Activated CD8-positive, alpha-beta T cell treated with anti-CD3 and anti-CD28 coated beads for 36 hours (primary cell): ENCODE measurements at regions of chr3 and their contacts with region 1.

Region 1: DNA sequence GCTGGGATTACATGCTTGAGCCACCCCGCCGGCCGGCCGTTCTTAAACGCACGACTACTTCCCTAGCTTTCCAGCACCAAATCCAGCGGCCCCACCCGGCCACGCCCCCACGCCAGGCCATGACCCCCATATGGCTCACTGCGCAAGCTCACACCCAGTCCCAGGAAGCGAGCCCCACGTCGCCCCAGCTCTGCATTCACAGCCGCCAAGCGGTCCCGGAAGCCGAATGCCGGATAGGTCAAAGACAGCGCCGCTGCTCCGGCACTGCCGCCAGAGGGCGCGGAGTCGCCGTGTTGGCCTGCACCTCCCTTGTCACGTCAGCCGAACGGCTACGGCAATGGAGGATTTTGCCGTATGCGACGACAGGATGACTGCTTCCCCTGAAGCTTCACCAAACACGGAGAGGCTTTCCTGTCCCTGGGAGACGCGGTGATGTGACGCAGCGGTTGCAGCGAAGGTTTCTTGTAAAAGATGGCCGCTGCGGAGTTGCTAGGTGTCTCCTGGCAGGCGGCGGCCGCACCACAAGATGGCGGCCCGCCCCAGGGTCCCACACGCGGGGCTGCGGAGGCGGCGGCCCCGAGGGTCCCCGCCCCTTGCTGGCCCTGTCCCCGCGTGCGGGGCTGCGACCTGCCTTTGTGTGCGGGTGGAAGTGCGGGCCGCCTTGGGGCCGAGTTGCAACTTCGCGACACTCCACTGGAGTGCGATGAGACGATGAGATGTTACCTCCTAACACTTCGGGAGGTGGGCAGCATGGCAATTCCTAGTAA is 30.2 kb upstream of the RPN1 start:
- DNase-seq: peak; percentile 98
- ATAC-seq: peak; percentile 98
- H3K4me3 Mint-ChIP-seq: peak overlapping the region; percentile 93
- H3K27ac Mint-ChIP-seq: peak overlapping the region; percentile 98
- H3K4me1 Mint-ChIP-seq: peaks cover 19% of the 10 kb centered on the region
- H3K27me3 Mint-ChIP-seq: no peaks in the 10 kb centered on the region
- CTCF ChIP-seq: peak; percentile 90

Region 2: DNA sequence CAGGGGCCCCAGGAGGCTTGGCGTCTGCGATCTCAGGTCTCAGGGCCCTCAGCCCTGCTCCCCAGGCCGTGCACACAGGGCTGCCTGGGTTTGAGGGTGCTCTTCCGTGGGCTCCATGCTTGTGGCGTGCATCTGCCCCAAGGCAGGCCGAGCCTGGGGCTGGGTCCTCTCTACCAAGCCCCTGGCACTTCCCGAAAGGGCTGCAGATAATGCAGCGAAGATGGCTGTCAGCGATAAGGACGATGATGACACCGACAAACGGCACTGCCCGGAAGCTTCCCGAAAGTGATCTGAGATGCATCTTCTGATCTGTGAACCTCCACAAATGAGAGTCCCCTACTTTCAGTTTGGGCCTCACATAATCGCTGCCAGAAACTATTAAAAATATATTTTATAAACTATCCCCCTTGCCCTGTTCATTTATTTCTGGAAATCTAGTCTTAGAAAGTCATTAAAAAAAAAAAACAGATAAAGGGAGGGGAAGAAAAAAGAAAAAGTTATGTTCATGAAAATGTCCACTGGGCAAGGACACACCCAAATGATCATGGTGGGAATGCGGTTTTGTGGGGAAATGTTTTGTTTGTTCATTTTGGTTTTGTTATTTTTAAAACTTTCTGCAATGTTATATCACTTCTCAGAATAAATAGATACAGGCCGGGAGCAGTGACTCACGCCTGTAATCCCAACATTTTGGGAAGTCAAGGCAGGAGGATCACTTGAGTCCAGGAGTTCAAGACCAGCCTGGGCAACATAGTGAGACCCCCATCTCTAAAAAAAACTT is 81.7 kb before region 1 on chr3:
- CTCF ChIA-PET with region 1: no interaction called
- POLR2A ChIA-PET with region 1: no interaction called
- intact Hi-C with region 1: no loop called
- DNase-seq: no peak
- ATAC-seq: no peak
- H3K4me3 Mint-ChIP-seq: no peak overlapping the region
- H3K27ac Mint-ChIP-seq: no peak overlapping the region
- H3K4me1 Mint-ChIP-seq: peaks cover 3% of the 10 kb centered on the region
- H3K27me3 Mint-ChIP-seq: no peaks in the 10 kb centered on the region
- CTCF ChIP-seq: no peak

Region 3: DNA sequence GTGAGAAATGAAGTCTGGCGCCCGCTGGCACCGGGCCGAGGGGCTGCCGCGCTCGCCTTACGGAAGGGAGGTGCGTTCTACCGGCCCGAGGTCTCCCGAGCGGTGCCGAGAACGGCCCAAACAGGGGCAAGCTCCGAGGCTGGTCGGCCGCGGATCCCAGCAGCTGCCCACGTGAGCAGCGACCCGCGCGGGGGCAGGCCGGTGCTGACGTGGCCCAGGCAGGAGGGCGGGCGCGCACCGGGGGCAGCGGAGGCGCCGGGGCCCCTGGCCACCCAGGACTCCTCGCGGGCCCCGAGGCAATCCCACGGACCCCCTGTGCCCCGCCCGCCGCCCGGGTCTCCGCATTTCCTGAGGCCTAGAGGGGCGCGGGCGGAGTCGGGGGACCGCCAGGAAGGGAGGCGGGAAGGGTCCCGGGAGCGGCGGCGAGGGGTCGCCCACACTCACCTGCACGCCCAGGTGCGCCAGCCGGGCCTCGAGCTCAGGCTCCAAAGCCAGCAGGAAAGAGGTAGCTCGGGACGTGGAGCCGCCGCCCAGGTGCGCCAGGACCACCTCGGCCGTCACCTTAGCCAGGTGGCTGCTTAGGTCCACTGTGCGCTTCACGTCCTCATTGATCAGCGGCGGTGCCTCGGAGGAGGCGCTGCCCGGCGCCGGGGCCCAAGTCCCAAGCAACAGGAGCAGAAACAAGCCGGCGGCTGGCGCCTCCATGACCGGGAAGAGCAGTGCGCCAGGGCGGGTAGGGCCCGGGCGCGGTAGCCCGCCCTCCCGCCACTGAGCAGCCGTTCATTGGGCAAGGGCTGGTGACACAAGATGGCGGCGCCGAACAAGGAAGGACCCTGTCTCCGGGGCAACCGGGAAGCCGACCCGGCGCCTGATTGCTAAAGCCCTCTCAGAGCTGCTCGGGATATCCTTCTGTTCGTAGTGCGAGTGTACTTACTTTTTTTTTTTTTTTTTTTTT is 30.4 kb before region 1 on chr3 and contains the start of gene RPN1:
- CTCF ChIA-PET with region 1: interaction called, 11 read pairs
- POLR2A ChIA-PET with region 1: interaction called, 11 read pairs
- intact Hi-C with region 1: no loop called
- DNase-seq: peak; percentile 97
- ATAC-seq: peak; percentile 97
- H3K4me3 Mint-ChIP-seq: peak within 1 kb of the TSS; percentile 87
- H3K27ac Mint-ChIP-seq: peak within 1 kb of the TSS; percentile 88
- H3K4me1 Mint-ChIP-seq: peaks cover 34% of the 10 kb centered on the region
- H3K27me3 Mint-ChIP-seq: no peaks in the 10 kb centered on the region
- CTCF ChIP-seq: no peak
- total RNA-seq, gene RPN1: 133 TPM

Region 4: DNA sequence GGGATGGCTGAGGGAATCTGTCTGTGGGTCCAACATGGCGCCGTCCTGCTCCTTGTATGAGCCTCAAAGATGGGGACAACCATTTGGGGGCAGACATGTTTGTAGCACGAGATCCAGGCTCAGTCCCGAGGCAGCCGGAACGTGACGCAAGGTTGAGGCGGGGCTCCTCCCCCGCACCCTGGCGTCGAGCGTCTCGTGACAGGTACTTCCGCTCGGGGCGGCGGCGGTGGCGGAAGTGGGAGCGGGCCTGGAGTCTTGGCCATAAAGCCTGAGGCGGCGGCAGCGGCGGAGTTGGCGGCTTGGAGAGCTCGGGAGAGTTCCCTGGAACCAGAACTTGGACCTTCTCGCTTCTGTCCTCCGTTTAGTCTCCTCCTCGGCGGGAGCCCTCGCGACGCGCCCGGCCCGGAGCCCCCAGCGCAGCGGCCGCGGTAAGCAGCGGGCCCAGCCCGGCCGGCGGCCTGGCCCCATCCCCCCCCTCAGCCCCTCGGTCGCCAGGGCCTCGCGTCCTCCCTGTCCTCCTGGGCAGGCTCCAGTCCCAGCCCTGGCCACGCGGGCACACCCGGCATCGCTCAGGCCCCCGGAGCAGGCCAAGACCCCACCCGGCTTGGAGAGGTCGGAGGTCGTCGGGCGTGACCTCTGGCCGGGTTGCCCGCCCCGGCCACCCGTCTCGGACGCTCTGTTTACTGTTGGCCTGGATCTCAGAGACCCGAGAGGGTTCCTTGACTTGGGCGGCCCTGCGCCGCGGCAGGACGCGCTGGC is 45.3 kb after region 1 on chr3 and contains the start of gene RAB7A:
- CTCF ChIA-PET with region 1: interaction called, 25 read pairs
- POLR2A ChIA-PET with region 1: interaction called, 11 read pairs
- intact Hi-C with region 1: loop called (anchors 5 kb)
- DNase-seq: peak; percentile 98
- ATAC-seq: peak; percentile 90
- H3K4me3 Mint-ChIP-seq: peak within 1 kb of the TSS; percentile 100
- H3K27ac Mint-ChIP-seq: peak within 1 kb of the TSS; percentile 97
- H3K4me1 Mint-ChIP-seq: peaks cover 50% of the 10 kb centered on the region
- H3K27me3 Mint-ChIP-seq: no peaks in the 10 kb centered on the region
- CTCF ChIP-seq: no peak
- total RNA-seq, gene RAB7A: 304 to 322 TPM

Region 5: GRCh38 chr3:128760042-128760441 is 79.3 kb after region 1 on chr3:
- CTCF ChIA-PET with region 1: interaction called, 12 read pairs
- POLR2A ChIA-PET with region 1: no interaction called
- intact Hi-C with region 1: no loop called
- DNase-seq: no peak
- ATAC-seq: no peak
- H3K4me3 Mint-ChIP-seq: no peak overlapping the region
- H3K27ac Mint-ChIP-seq: peak overlapping the region; percentile 14
- H3K4me1 Mint-ChIP-seq: peaks cover 66% of the 10 kb centered on the region
- H3K27me3 Mint-ChIP-seq: no peaks in the 10 kb centered on the region
- CTCF ChIP-seq: no peak

Region 6: DNA sequence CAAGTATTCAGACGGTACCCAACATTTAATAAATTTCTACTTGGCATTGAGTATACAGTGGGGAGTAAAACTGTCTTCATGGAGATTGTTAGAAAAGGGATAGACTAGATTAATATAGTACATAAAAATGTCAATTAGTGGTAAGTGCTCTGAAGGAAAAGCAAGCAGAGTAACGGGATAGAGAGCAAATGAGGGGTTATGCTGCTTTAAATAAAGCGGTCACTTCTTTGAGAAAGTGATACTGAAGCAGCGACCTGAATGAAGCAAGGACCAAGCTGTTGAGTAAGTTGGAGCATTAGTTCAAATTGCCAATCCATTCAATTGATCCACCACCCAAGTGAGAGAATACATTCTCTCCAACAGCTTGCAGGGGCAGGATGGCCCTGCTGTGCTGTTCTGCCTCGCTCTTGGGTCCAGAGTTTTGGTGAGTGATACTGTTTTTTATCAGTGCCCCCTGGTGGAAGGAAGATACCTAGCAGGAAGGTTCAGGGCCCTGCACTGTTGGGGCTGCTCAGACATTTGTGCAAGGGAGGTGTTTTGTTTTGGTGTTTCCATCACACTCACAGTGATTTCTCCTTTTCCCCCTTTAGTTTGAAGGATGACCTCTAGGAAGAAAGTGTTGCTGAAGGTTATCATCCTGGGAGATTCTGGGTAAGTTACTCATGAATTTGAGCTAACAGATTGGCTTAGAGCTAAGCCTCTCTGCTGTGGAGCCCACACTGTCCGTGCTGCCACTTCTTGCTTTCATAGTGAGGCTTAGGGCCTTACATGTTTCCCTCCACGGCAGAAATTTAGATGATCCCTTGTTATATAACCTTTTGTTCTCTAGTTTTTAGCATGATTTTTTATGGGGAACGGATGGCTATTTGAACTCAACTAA is 114.2 kb after region 1 on chr3:
- CTCF ChIA-PET with region 1: interaction called, 119 read pairs
- POLR2A ChIA-PET with region 1: interaction called, 13 read pairs
- intact Hi-C with region 1: loop called (anchors 2 kb)
- DNase-seq: peak; percentile 78
- ATAC-seq: peak; percentile 74
- H3K4me3 Mint-ChIP-seq: peak overlapping the region; percentile 48
- H3K27ac Mint-ChIP-seq: peak overlapping the region; percentile 90
- H3K4me1 Mint-ChIP-seq: peaks cover 87% of the 10 kb centered on the region
- H3K27me3 Mint-ChIP-seq: no peaks in the 10 kb centered on the region
- CTCF ChIP-seq: peak; percentile 85

Region 7: GRCh38 chr3:128845778-128846485 is 165.1 kb after region 1 on chr3:
- CTCF ChIA-PET with region 1: interaction called, 37 read pairs
- POLR2A ChIA-PET with region 1: interaction called, 13 read pairs
- intact Hi-C with region 1: no loop called
- DNase-seq: peak; percentile 94
- ATAC-seq: peak; percentile 91
- H3K4me3 Mint-ChIP-seq: peak overlapping the region; percentile 67
- H3K27ac Mint-ChIP-seq: peak overlapping the region; percentile 94
- H3K4me1 Mint-ChIP-seq: peaks cover 22% of the 10 kb centered on the region
- H3K27me3 Mint-ChIP-seq: no peaks in the 10 kb centered on the region
- CTCF ChIP-seq: peak; percentile 91

Region 8: GRCh38 chr3:128879125-128879969 is 198.6 kb after region 1 on chr3 and contains the start of gene ACAD9:
- CTCF ChIA-PET with region 1: interaction called, 33 read pairs
- POLR2A ChIA-PET with region 1: interaction called, 7 read pairs
- intact Hi-C with region 1: no loop called
- DNase-seq: peak; percentile 96
- ATAC-seq: peak; percentile 91
- H3K4me3 Mint-ChIP-seq: peak within 1 kb of the TSS; percentile 92
- H3K27ac Mint-ChIP-seq: peak within 1 kb of the TSS; percentile 97
- H3K4me1 Mint-ChIP-seq: peaks cover 52% of the 10 kb centered on the region
- H3K27me3 Mint-ChIP-seq: no peaks in the 10 kb centered on the region
- CTCF ChIP-seq: no peak
- total RNA-seq, gene ACAD9: 50.1 to 50.5 TPM